AG04450 (cell line): ENCODE measurements at regions of chr20 and their contacts with region 1.

Region 1: DNA sequence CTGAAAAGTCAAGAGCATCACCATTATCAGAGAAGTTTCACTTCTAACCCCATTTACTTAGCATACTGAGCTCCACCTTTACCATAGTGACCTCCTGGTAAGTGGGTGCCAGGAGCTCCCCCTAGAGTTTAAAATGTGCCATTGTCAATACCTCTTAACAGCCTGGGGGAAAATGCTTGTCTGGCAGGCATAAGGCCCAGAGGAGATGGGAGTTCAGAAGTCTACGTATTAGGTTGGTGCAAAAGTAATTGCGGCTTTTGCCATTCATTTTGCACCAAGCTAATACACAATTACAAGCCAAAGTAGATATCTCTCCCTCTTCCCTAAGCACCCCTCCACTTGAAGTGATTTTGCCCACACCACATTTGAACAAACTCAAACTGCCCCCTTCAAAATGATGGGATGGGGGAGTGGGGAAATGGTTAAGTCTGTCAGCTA is 919.0 kb downstream of the KIF16B start:
- DNase-seq: no peak
- H3K4me3 ChIP-seq: no peak overlapping the region
- H3K27ac ChIP-seq: no peak overlapping the region
- H3K27me3 ChIP-seq: no peaks in the 10 kb centered on the region
- CTCF ChIP-seq: peak; percentile 62

Region 2: DNA sequence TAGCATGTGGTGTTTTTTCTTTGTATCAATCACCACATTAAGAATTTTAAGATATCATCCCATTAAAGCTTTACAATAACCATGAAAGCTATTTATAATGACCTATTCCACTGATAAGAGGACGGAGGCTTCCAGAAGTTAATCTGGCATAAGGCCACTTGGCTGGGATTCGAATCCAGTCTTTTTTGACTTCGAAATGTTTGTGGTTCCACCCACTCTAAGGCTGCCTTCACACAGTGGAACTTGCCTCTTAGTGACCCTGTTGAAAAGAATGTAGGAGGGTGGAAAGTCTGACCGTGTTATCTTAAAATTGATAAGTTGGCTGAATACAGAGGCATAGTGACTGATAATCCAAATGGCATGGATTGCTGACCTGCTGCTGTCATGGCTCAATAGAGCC is 40.7 kb before region 1 on chr20:
- CTCF ChIA-PET with region 1: no interaction called
- POLR2A ChIA-PET with region 1: no interaction called
- DNase-seq: no peak
- H3K4me3 ChIP-seq: no peak overlapping the region
- H3K27ac ChIP-seq: no peak overlapping the region
- H3K27me3 ChIP-seq: no peaks in the 10 kb centered on the region
- CTCF ChIP-seq: no peak

Region 3: DNA sequence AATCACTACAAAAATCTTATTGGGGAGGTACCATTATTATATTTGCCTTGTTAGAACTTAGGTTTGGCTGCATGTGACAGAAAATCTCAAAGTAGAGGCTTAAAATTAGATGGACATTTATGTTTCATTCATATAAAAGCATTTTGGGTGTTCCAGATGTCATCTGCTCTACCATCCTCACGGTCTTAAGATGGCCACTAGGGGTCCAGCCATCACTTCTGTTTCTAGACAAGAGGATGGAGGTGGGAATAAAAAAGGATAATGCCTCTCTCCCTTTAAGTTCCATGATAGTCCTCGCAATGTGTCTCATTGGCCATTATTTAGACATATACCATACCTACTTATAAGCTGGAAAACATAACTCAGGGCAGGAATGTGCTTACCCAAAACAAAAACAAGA is 10.5 kb before region 1 on chr20:
- CTCF ChIA-PET with region 1: interaction called, 32 read pairs
- POLR2A ChIA-PET with region 1: no interaction called
- DNase-seq: no peak
- H3K4me3 ChIP-seq: no peak overlapping the region
- H3K27ac ChIP-seq: no peak overlapping the region
- H3K27me3 ChIP-seq: no peaks in the 10 kb centered on the region
- CTCF ChIP-seq: peak; percentile 38

Region 4: DNA sequence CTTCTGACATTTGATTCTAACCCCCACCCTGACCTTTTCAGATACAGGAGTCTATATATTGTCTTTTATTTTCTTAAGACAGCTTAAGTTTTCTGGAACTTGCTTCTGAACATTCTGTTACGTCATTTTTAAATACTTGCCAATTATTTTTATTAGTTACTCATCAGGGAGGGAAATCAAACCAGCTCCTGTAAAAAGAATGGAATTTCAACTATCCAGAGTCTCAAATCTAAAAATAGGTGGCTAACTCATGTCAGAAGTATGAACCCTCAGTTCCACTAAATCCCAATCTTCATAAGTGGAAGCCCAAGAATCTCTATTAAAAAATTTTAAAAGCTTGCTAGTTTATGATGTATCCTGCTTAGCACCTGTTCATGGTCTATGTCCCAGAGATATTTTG is 19.0 kb after region 1 on chr20:
- CTCF ChIA-PET with region 1: interaction called, 18 read pairs
- POLR2A ChIA-PET with region 1: interaction called, 6 read pairs
- DNase-seq: peak; percentile 47
- H3K4me3 ChIP-seq: no peak overlapping the region
- H3K27ac ChIP-seq: no peak overlapping the region
- H3K27me3 ChIP-seq: no peaks in the 10 kb centered on the region
- CTCF ChIP-seq: no peak